Thyroid gland (tissue), 4 donors: ENCODE measurements at regions of chr13 and their contacts with region 1.

Region 1: GRCh38 chr13:113947321-113948033 is 26.4 kb downstream of the C13orf46 start:
- DNase-seq: peak; percentile 72 to 73
- H3K4me3 ChIP-seq: no peak overlapping the region
- H3K27ac ChIP-seq: no peak overlapping the region
- H3K4me1 ChIP-seq: peaks cover 0 to 11% of the 10 kb centered on the region in 2 donors
- H3K27me3 ChIP-seq: no peaks in the 10 kb centered on the region
- CTCF ChIP-seq: peak; percentile 31 to 90 (median 85)
- POLR2A ChIP-seq: no peak

Region 2: GRCh38 chr13:113816946-113817859 is 130.3 kb before region 1 on chr13:
- intact Hi-C with region 1: loop called (anchors 5 kb)
- DNase-seq: peak; percentile 96 to 97
- H3K4me3 ChIP-seq: no peak overlapping the region
- H3K27ac ChIP-seq: peak overlapping the region in 2 of 3 donors; percentile 42 to 71
- H3K4me1 ChIP-seq: peaks cover 42 to 71% of the 10 kb centered on the region in 2 donors
- H3K27me3 ChIP-seq: no peaks in the 10 kb centered on the region
- CTCF ChIP-seq: peak; percentile 45 to 94 (median 86)
- POLR2A ChIP-seq: no peak

Region 3: DNA sequence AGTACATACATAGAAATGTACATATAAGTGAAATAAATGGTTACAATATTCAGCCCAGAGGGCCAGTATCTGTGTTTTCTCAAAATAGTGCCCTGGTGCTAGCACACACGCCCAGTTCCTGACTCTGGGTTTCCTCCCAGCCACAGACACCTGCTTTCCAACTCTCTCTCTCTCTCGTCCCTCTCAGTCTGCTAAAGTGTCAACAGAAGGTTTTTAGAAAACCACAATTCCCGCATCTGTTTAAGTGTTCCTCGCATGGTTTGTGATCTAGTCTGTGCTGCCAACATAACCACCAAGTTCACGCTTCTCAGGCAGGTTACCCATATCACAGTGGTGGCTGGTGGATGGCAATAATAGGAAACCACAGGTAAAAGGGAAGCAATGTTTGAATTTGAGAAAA is 316.1 kb after region 1 on chr13:
- intact Hi-C with region 1: no loop called
- DNase-seq: no peak
- H3K4me3 ChIP-seq: no peak overlapping the region
- H3K27ac ChIP-seq: peak overlapping the region in 1 of 3 donors; percentile 14
- H3K4me1 ChIP-seq: peaks cover 10 to 13% of the 10 kb centered on the region in 2 donors
- H3K27me3 ChIP-seq: no peaks in the 10 kb centered on the region
- CTCF ChIP-seq: no peak
- POLR2A ChIP-seq: no peak